Activated CD4-positive, alpha-beta T cell treated with anti-CD3 and anti-CD28 coated beads for 36 hours (primary cell): ENCODE measurements at regions of chr4 and their contacts with region 1.

Region 1: GRCh38 chr4:101983836-101984235 is 193.3 kb downstream of the BANK1 start:
- DNase-seq: no peak
- ATAC-seq: no peak
- H3K4me3 Mint-ChIP-seq: no peak overlapping the region
- H3K27ac Mint-ChIP-seq: no peak overlapping the region
- H3K4me1 Mint-ChIP-seq: no peaks in the 10 kb centered on the region
- H3K27me3 Mint-ChIP-seq: peaks cover 5% of the 10 kb centered on the region

Region 2: GRCh38 chr4:100539706-100540105 is 1444.1 kb before region 1 on chr4:
- CTCF ChIA-PET with region 1: no interaction called
- POLR2A ChIA-PET with region 1: no interaction called
- intact Hi-C with region 1: no loop called
- DNase-seq: no peak
- ATAC-seq: no peak
- H3K4me3 Mint-ChIP-seq: no peak overlapping the region
- H3K27ac Mint-ChIP-seq: no peak overlapping the region
- H3K4me1 Mint-ChIP-seq: no peaks in the 10 kb centered on the region
- H3K27me3 Mint-ChIP-seq: peaks cover 5% of the 10 kb centered on the region

Region 3: DNA sequence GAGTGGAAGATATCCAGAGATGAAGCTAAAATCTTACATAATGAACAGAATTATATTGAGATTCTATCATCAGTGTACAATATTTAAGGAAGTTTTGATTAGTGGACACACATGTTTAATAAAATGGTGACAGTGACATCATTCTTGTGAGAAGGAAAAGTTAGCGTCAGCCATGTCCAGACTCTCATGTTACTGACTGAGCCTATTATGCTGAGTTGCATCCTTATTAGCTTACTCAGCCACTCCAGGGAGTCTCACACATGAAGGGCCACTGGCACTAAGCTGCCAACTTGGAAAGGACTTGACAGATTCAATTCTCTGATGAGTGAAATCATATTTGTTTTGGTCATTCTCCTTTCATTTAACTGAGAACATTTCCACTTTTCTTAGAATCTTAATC is 22.7 kb before region 1 on chr4:
- CTCF ChIA-PET with region 1: no interaction called
- POLR2A ChIA-PET with region 1: no interaction called
- intact Hi-C with region 1: loop called in 1 of 2 experiments (anchors 2 kb)
- DNase-seq: no peak
- ATAC-seq: no peak
- H3K4me3 Mint-ChIP-seq: no peak overlapping the region
- H3K27ac Mint-ChIP-seq: no peak overlapping the region
- H3K4me1 Mint-ChIP-seq: no peaks in the 10 kb centered on the region
- H3K27me3 Mint-ChIP-seq: no peaks in the 10 kb centered on the region

Region 4: DNA sequence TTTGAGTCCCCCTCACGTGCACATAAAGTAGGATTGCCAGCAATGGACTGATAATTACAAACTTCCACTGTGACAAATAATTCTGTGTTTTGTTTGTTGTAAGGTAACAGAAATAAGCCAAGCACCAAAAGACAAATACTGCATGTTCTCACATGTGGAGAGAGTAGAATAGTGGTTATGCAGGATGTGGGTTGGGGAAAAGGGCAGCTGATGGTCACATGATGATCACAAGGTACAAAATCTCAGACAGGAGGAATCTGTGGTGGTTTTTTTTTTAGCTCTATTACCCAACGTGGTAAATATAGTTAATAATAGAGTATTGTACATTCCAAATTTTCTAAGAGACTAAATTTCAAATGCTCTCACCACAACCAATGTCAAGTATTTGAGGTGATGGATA is 11.0 kb before region 1 on chr4:
- CTCF ChIA-PET with region 1: no interaction called
- POLR2A ChIA-PET with region 1: no interaction called
- intact Hi-C with region 1: no loop called
- DNase-seq: no peak
- ATAC-seq: no peak
- H3K4me3 Mint-ChIP-seq: no peak overlapping the region
- H3K27ac Mint-ChIP-seq: no peak overlapping the region
- H3K4me1 Mint-ChIP-seq: peaks cover 4% of the 10 kb centered on the region
- H3K27me3 Mint-ChIP-seq: peaks cover 13% of the 10 kb centered on the region

Region 5: DNA sequence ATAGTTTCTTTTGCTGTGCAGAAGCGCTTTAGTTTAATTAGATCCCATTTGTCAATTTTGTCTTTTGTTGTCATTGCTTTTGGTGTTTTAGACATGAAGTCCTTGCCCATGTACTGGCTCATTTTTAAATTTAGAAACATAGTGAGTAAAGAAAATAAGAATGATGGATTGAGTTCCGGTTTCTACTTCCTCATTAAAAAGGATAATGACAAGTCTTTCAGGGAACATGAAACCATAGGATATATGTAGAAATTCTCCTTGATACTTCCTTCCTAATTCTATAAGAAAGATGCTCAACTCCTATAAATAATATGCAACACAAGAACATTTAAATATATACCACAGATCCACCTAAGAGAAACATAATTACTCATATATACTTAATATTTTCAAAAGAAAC is 47.6 kb after region 1 on chr4:
- CTCF ChIA-PET with region 1: no interaction called
- POLR2A ChIA-PET with region 1: no interaction called
- intact Hi-C with region 1: no loop called
- DNase-seq: no peak
- ATAC-seq: no peak
- H3K4me3 Mint-ChIP-seq: no peak overlapping the region
- H3K27ac Mint-ChIP-seq: no peak overlapping the region
- H3K4me1 Mint-ChIP-seq: no peaks in the 10 kb centered on the region
- H3K27me3 Mint-ChIP-seq: no peaks in the 10 kb centered on the region